ENCODE measurements at regions of chr3 and their contacts with region 1.

Region 1: GRCh38 chr3:141370065-141370533 is 1.8 kb downstream of the ZBTB38 start:
- DNase-seq: no peak
- H3K4me3 ChIP-seq: no peak overlapping the region
- CTCF ChIP-seq: peak; percentile 9

Region 2: GRCh38 chr3:141255846-141256261 is 114.2 kb before region 1 on chr3:
- CTCF ChIA-PET with region 1: no interaction called
- POLR2A ChIA-PET with region 1: no interaction called
- DNase-seq: no peak
- H3K4me3 ChIP-seq: no peak overlapping the region
- CTCF ChIP-seq: no peak

Region 3: GRCh38 chr3:141279077-141279967 is 90.8 kb before region 1 on chr3:
- CTCF ChIA-PET with region 1: no interaction called
- POLR2A ChIA-PET with region 1: no interaction called
- DNase-seq: no peak
- H3K4me3 ChIP-seq: no peak overlapping the region
- CTCF ChIP-seq: peak; percentile 31

Region 4: GRCh38 chr3:141386611-141387111 is 16.6 kb after region 1 on chr3:
- CTCF ChIA-PET with region 1: interaction called, 21 read pairs
- POLR2A ChIA-PET with region 1: interaction called, 8 read pairs
- DNase-seq: no peak
- H3K4me3 ChIP-seq: no peak overlapping the region
- CTCF ChIP-seq: no peak

Region 5: DNA sequence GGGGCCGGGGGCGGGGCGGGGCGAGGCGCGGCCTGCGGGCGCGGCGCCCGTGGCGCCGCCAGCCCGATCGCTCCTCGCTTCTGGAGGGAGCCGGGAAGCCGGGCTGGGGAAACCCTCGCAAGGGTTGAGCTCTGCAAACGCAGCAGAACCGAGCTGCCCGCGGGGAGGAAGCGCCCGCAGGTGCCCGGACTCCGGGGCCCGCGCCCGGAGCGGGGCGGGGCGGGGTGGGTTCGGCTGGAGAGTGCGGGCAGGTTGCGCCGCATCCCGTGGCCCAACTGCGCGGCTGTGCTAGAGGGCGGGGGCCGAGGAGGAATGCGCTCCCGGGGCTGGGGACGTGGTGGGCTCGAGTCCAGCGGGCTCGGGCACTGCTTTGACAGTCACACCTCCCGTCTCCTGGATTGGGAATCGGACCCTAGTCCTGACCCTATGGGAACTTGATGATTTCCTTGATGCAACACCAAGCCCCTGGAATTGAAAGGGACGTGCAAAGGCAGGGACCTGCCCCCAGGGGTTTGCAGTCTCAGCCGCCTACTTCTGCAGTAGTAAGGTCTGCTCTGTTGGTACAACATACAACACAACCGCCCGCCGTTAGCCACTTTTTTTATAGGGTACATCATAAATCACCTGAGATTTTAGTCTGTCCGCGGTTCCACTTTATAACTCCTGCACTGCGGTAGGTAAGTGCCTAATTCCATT is 32.5 kb after region 1 on chr3:
- CTCF ChIA-PET with region 1: interaction called, 8 read pairs
- POLR2A ChIA-PET with region 1: interaction called, 13 read pairs
- DNase-seq: no peak
- H3K4me3 ChIP-seq: peak overlapping the region; percentile 62
- CTCF ChIP-seq: no peak